ENCODE measurements at regions of chr9 and their contacts with region 1.

Region 1: GRCh38 chr9:124771021-124771866 is at the start of gene NR6A1:
- DNase-seq: peak; percentile 92
- ATAC-seq: peak; percentile 88
- H3K4me3 ChIP-seq: peak within 1 kb of the TSS; percentile 97
- H3K27ac ChIP-seq: peak within 1 kb of the TSS; percentile 86
- H3K4me1 ChIP-seq: peaks cover 21% of the 10 kb centered on the region
- H3K27me3 ChIP-seq: no peaks in the 10 kb centered on the region
- CTCF ChIP-seq: peak in 2 of 3 experiments; percentile 19 to 22; a peak in 3 of 6 replicates
- EP300 ChIP-seq: no peak
- POLR2A ChIP-seq: peak; percentile 64
- RAD21 ChIP-seq: no peak
- polyA plus RNA-seq, gene NR6A1: 1.2 to 2.5 TPM

Region 2: GRCh38 chr9:124754289-124754688 is 17.0 kb before region 1 on chr9:
- CTCF ChIA-PET with region 1: interaction called, 45 read pairs
- POLR2A ChIA-PET with region 1: interaction called, 7 read pairs
- RAD21 ChIA-PET with region 1: interaction called, 5 read pairs
- SMC1A ChIA-PET with region 1: interaction called, 21 read pairs
- in situ Hi-C with region 1: no loop called
- intact Hi-C with region 1: no loop called
- DNase-seq: no peak
- ATAC-seq: peak; percentile 50; the same call in 1 of the 3 replicates
- H3K4me3 ChIP-seq: no peak overlapping the region
- H3K27ac ChIP-seq: no peak overlapping the region
- H3K4me1 ChIP-seq: peaks cover 14% of the 10 kb centered on the region
- H3K27me3 ChIP-seq: no peaks in the 10 kb centered on the region
- CTCF ChIP-seq: peak; percentile 10 to 41 (median 12); a peak in 3 of 6 replicates
- EP300 ChIP-seq: no peak
- POLR2A ChIP-seq: no peak
- RAD21 ChIP-seq: peak; percentile 57

Region 3: DNA sequence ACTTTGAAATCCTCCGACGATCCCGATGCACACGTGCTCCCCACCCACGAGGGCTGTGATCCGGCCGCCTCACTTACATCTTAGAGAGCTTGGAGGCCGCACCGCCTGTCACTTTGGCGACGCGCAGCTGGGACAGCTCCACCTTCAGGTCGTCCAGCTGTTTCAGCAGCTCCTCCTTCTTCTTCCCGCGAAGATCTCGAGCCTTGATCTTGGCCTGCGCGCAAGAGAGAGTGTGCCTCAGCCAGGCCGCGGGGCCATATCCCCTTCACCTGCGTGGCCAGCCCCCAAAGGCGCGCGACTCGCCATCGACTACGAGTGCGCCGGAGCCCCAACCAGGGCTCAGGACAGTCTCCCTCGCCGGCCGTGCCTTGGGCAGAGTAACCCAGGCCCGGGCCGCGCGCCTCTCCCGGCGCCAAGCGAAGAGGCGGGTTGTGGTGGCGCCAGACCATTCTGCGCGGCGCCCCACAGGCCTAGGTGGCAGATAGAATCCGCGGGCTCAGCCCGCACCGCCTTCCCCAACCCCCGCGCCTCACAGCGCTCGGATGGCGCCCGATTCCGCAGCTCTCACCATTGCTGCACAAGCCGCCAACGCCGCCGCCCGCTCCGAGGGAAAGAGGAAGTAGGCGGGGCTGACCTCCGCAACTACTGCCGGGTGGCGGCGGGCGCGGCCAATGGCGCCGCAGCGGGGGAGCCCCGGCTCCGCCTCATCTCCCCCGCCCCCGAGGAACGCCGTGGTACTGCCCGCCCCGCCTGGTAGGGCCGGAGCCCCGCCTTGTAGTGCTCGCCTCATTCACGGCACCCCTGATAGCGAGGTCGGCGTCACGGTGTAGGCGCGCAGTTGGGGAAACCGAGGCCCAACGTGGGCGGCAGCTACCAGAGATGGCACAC is 90.3 kb after region 1 on chr9 and contains the starts of genes ARPC5L and RPL35:
- CTCF ChIA-PET with region 1: interaction called, 575 read pairs
- POLR2A ChIA-PET with region 1: interaction called, 41 read pairs
- RAD21 ChIA-PET with region 1: interaction called, 180 read pairs
- SMC1A ChIA-PET with region 1: interaction called, 233 read pairs
- in situ Hi-C with region 1: no loop called
- intact Hi-C with region 1: no loop called
- DNase-seq: peak; percentile 80
- ATAC-seq: peak; percentile 95
- H3K4me3 ChIP-seq: peak within 1 kb of the TSS; percentile 95
- H3K27ac ChIP-seq: peak within 1 kb of the TSS; percentile 83
- H3K4me1 ChIP-seq: peaks cover 13% of the 10 kb centered on the region
- H3K27me3 ChIP-seq: no peaks in the 10 kb centered on the region
- CTCF ChIP-seq: peak; percentile 5 to 16 (median 15); a peak in 2 of 6 replicates
- EP300 ChIP-seq: no peak
- POLR2A ChIP-seq: peak; percentile 99
- RAD21 ChIP-seq: no peak
- polyA plus RNA-seq, gene ARPC5L: 42.3 to 121 TPM
- polyA plus RNA-seq, gene RPL35: 5,281 to 6,300 TPM

Region 4: GRCh38 chr9:125143375-125144090 is 372.3 kb after region 1 on chr9 and contains the start of gene SCAI:
- CTCF ChIA-PET with region 1: interaction called, 9 read pairs
- POLR2A ChIA-PET with region 1: interaction called, 3 read pairs
- RAD21 ChIA-PET with region 1: interaction called, 8 read pairs
- SMC1A ChIA-PET with region 1: interaction called, 8 read pairs
- in situ Hi-C with region 1: loop called (anchors 5 kb)
- intact Hi-C with region 1: loop called (anchors 1 kb)
- DNase-seq: peak; percentile 95
- ATAC-seq: peak; percentile 99
- H3K4me3 ChIP-seq: peak within 1 kb of the TSS; percentile 67
- H3K27ac ChIP-seq: peak within 1 kb of the TSS; percentile 6; the same call in 1 of the 2 replicates
- H3K4me1 ChIP-seq: peaks cover 10% of the 10 kb centered on the region
- H3K27me3 ChIP-seq: no peaks in the 10 kb centered on the region
- CTCF ChIP-seq: peak; percentile 96 to 99 (median 97)
- EP300 ChIP-seq: no peak; a peak in 1 of 4 replicates
- POLR2A ChIP-seq: peak; percentile 75
- RAD21 ChIP-seq: peak; percentile 72
- polyA plus RNA-seq, gene SCAI: 0.52 to 0.82 TPM